Transverse colon (tissue), 4 donors: ENCODE measurements at regions of chr22 and their contacts with region 1.

Region 1: DNA sequence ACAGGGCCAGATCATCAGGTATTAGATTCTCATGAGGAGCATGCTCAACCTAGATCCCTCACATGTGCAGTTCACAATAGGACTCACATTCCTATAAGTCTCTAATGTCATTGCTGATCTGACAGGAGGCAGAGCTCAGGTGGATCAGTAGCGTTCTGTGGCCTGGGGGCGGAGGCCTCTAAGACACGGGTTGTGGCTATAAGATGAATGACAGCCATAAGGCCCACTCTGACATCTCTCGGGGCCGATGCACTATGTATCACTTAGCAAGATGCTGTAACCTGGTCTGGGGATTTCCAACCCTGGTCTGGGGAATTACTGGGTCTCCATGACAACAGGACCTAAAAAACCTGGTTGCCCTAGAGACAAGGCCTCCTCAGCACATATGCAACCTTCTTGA is 932.7 kb downstream of the TBC1D22A start:
- DNase-seq: no peak
- H3K4me3 ChIP-seq: no peak overlapping the region
- H3K27ac ChIP-seq: no peak overlapping the region
- H3K4me1 ChIP-seq: no peaks in the 10 kb centered on the region
- H3K27me3 ChIP-seq: no peaks in the 10 kb centered on the region
- CTCF ChIP-seq: no peak
- EP300 ChIP-seq: no peak
- POLR2A ChIP-seq: no peak

Region 2: DNA sequence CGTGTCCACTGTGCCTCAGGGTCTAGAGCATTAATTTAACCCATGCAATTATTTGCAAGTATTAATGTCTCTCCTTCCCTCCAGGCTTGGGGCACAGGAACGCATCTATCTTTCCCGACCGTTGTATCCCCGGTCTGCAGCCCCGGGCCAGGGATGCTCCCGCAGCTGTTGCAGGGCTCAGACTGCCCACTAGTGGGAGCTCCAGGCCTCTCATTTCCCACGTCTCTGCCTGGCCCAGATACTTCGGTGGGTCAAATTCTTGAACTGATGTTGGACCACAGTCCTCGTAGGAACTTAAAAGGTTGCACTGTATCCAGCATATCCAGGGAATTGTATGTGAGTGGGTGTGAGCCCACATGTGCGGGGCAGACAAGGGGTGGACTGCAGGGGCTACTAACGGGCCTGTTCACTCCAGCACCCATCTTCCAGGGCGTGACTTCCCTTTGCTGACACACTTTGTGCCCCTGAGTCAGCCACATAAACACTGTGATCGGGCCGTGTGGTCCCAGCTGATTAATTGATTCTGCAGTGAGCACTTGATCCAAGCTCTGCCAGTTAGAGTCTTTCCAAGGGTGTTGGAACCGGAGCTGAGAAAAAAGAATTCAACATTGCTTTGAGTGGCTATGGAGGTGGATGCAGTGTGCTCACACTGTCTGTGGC is 481.5 kb before region 1 on chr22:
- in situ Hi-C with region 1: no loop called
- intact Hi-C with region 1: no loop called
- DNase-seq: peak; percentile 28
- H3K4me3 ChIP-seq: no peak overlapping the region
- H3K27ac ChIP-seq: no peak overlapping the region
- H3K4me1 ChIP-seq: no peaks in the 10 kb centered on the region
- H3K27me3 ChIP-seq: peaks cover 5% of the 10 kb centered on the region
- CTCF ChIP-seq: peak; percentile 58 to 73 (median 62)
- EP300 ChIP-seq: no peak
- POLR2A ChIP-seq: no peak

Region 3: DNA sequence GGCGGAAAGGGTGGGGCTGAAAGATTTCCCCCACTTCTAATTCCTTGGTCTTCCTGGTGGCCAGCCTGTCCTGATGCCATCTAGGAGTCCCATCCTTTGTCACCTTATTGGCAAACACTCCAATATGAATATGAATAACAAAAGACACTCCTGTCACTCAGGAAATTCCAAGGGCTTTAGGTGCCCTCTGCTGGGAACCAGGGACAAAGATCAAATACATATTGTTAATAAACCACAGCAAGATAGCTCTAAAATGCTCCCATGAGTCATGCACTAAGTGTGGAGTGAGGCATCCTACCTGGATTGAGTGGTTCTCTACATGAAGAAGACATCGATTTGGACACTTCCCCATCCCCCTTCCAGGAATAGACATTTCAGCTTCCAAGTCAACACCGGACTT is 109.2 kb before region 1 on chr22:
- in situ Hi-C with region 1: loop called in 1 of 4 experiments (anchors 25 kb)
- intact Hi-C with region 1: no loop called
- DNase-seq: no peak
- H3K4me3 ChIP-seq: no peak overlapping the region
- H3K27ac ChIP-seq: no peak overlapping the region
- H3K4me1 ChIP-seq: no peaks in the 10 kb centered on the region
- H3K27me3 ChIP-seq: no peaks in the 10 kb centered on the region
- CTCF ChIP-seq: no peak
- EP300 ChIP-seq: no peak
- POLR2A ChIP-seq: no peak